MCF 10A (cell line): ENCODE measurements at regions of chr5 and their contacts with region 1.

Region 1: DNA sequence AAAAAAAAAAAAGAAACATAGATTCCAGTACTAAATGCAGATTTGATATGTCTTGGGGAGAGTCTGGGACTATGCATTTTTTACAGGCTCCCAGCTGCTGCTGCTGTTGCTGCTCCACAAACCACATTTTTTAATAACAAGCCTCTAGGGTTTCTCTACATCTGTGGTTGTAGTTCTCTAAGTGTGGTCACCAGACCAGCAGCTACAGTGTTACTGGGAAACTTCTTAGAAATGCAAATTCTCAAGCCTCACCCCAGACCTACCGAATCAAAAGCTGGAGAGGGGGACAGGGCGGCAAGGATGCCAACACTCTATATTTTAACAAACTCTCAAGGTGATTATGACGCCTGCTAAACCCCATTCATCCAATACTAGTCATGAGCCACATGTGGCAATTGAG is 293.4 kb upstream of the PTGER4 start:
- DNase-seq: no peak
- H3K4me3 Mint-ChIP-seq: no peak overlapping the region
- H3K27ac Mint-ChIP-seq: no peak overlapping the region
- H3K4me1 Mint-ChIP-seq: peaks cover 26% of the 10 kb centered on the region
- H3K27me3 Mint-ChIP-seq: no peaks in the 10 kb centered on the region
- CTCF ChIP-seq: no peak

Region 2: DNA sequence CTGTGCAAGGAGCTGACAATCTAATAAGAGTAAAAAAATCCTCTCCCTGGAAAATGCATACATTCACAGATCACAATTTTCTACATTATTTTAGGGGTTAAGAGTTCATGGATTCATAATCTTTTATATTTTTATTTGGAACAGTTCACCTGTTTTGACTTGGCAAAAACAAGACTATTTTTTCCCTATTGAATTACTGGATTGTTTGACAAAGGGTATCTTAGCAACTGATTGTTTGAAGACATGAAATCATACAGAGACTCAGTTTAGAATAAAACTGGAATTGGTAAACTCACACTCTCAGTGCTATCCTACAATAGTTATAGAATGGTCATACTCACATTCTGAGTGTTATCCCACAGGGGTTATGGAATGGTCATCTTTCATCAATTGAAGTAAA is 64.8 kb before region 1 on chr5:
- CTCF ChIA-PET with region 1: no interaction called
- POLR2A ChIA-PET with region 1: no interaction called
- intact Hi-C with region 1: no loop called
- DNase-seq: no peak
- H3K4me3 Mint-ChIP-seq: no peak overlapping the region
- H3K27ac Mint-ChIP-seq: no peak overlapping the region
- H3K4me1 Mint-ChIP-seq: no peaks in the 10 kb centered on the region
- H3K27me3 Mint-ChIP-seq: no peaks in the 10 kb centered on the region
- CTCF ChIP-seq: no peak

Region 3: GRCh38 chr5:40410231-40410861 is 24.1 kb after region 1 on chr5:
- CTCF ChIA-PET with region 1: no interaction called
- POLR2A ChIA-PET with region 1: interaction called, 6 read pairs
- intact Hi-C with region 1: loop called (anchors 2 kb)
- DNase-seq: peak; percentile 53
- H3K4me3 Mint-ChIP-seq: peak overlapping the region; percentile 41
- H3K27ac Mint-ChIP-seq: peak overlapping the region; percentile 59
- H3K4me1 Mint-ChIP-seq: peaks cover 27% of the 10 kb centered on the region
- H3K27me3 Mint-ChIP-seq: no peaks in the 10 kb centered on the region
- CTCF ChIP-seq: no peak

Region 4: GRCh38 chr5:40477856-40478546 is 91.7 kb after region 1 on chr5:
- CTCF ChIA-PET with region 1: no interaction called
- POLR2A ChIA-PET with region 1: no interaction called
- intact Hi-C with region 1: loop called (anchors 5 kb)
- DNase-seq: peak; percentile 77
- H3K4me3 Mint-ChIP-seq: no peak overlapping the region
- H3K27ac Mint-ChIP-seq: no peak overlapping the region
- H3K4me1 Mint-ChIP-seq: peaks cover 10% of the 10 kb centered on the region
- H3K27me3 Mint-ChIP-seq: no peaks in the 10 kb centered on the region
- CTCF ChIP-seq: no peak

Region 5: DNA sequence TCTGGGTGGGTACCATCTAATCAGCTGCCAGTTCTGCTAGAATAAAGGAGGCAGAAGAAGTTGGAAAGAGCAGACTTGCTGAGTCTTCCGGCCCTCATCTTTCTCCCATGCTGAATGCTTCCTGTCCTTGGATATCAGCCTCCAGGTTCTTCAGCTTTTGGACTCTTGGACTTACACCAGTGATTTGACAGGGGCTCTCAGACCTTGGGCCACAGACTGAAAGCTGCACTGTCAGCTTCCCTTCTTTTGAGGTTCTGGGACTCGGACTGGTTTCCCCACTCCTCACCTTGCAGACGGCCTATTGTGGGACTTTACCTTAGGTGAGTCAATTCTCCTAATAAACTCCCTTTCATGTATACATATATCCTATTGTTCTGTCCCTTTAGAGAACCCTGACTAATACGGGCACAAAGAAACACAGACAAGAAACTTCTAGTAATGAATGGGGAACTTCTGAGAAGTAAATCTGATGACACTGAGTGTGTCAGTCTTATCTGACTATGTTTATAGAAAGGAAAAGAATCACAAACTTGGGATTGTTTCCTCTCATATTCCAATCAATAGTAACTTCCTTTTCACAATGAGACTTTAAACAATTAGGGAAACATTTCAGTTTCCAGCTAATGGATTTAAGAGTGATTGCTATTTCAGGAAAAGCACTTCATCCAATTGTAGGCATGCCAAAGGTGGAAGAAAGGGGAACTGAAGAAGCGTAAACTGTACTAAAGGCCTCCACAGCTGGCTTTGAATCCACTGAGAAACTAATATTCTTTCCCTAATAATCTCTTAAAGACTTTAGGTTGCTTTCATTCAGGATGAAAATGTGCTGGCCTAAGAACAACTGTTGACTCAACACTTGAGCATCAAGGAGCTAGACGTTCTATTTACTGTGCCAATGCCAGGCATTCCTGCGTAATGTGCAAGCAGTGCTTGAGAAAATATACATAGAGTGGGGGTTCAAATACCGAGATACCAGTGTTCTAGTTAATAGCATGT is 165.5 kb after region 1 on chr5:
- CTCF ChIA-PET with region 1: no interaction called
- POLR2A ChIA-PET with region 1: no interaction called
- intact Hi-C with region 1: loop called (anchors 10 kb)
- DNase-seq: peak; percentile 86
- H3K4me3 Mint-ChIP-seq: peak overlapping the region; percentile 41
- H3K27ac Mint-ChIP-seq: peak overlapping the region; percentile 87
- H3K4me1 Mint-ChIP-seq: peaks cover 27% of the 10 kb centered on the region
- H3K27me3 Mint-ChIP-seq: no peaks in the 10 kb centered on the region
- CTCF ChIP-seq: no peak